ENCODE measurements at regions of chr1 and their contacts with region 1.

Region 1: GRCh38 chr1:63888984-63889383 is 115.2 kb downstream of the ROR1 start:
- DNase-seq: no peak
- H3K4me3 ChIP-seq: no peak overlapping the region
- H3K27ac ChIP-seq: no peak overlapping the region
- H3K4me1 ChIP-seq: no peaks in the 10 kb centered on the region
- H3K27me3 ChIP-seq: no peaks in the 10 kb centered on the region
- CTCF ChIP-seq: no peak
- POLR2A ChIP-seq: no peak

Region 2: DNA sequence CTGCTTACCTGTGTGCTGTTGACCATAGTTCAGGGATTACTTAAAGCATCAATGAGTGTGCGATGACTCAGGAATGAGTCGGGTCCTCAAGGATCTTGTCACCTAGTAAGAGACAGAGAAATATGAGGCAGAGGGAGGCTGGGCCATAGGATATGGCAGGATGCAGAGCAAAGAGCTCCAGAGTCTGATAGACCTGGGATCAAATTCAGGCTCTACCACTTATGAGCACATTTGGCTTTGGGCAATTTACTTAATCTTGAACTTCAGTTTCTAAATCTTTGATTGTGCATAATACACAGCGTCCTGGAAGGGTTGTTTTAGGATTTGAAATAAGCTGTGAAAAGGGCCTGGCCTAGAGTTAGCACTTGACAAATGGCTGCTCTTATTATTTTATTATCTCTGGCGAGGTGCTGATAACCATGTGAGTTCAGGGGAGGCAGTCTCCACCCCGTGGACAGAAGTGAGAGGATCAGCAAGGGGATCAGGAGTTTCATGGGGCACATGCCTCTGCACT is 20.7 kb before region 1 on chr1:
- intact Hi-C with region 1: no loop called
- DNase-seq: no peak
- H3K4me3 ChIP-seq: no peak overlapping the region
- H3K27ac ChIP-seq: no peak overlapping the region
- H3K4me1 ChIP-seq: peaks cover 0 to 3% of the 10 kb centered on the region in 2 donors
- H3K27me3 ChIP-seq: no peaks in the 10 kb centered on the region
- CTCF ChIP-seq: no peak
- POLR2A ChIP-seq: no peak

Region 3: DNA sequence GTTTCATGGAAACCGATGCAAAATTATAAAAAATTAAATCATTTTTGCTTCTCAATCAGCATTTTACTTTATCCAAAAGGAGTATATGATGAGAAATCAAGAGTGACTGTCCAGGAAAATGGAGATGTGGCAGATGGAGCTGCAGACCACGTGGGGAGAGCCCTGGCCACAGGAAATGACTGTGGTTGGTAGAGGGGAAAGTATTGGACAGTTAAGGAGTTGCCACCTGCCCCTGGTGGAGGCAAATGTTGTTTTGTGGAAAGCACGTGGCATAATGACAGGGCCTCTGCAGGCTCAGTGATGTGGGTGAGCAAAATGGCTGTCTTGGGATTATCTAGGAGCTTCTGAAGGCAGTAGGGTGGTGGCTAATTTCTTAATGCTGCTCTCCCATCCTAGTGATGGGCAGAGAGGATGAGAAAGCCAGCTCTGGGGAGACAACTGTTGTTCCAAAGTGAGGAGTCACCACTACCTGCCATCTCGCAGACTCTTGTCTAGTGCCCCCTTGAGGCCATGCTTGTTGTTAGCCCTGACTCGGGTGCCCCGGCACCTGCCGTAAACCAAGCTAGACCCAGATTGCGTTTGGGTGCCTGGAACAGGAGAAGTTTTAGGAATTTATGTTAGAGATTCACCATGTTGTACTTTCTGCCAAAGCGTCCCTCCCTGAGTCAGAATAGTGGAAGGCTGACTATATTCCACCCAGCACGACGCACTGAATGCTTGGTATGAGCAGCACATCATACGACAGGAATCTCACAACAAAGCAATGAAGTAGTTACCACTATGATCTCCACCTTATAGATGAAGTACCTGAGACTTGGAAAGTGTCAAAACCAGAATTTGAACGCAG is 28.8 kb after region 1 on chr1:
- intact Hi-C with region 1: no loop called
- DNase-seq: no peak
- H3K4me3 ChIP-seq: no peak overlapping the region
- H3K27ac ChIP-seq: no peak overlapping the region
- H3K4me1 ChIP-seq: no peaks in the 10 kb centered on the region
- H3K27me3 ChIP-seq: no peaks in the 10 kb centered on the region
- CTCF ChIP-seq: no peak
- POLR2A ChIP-seq: no peak

Region 4: DNA sequence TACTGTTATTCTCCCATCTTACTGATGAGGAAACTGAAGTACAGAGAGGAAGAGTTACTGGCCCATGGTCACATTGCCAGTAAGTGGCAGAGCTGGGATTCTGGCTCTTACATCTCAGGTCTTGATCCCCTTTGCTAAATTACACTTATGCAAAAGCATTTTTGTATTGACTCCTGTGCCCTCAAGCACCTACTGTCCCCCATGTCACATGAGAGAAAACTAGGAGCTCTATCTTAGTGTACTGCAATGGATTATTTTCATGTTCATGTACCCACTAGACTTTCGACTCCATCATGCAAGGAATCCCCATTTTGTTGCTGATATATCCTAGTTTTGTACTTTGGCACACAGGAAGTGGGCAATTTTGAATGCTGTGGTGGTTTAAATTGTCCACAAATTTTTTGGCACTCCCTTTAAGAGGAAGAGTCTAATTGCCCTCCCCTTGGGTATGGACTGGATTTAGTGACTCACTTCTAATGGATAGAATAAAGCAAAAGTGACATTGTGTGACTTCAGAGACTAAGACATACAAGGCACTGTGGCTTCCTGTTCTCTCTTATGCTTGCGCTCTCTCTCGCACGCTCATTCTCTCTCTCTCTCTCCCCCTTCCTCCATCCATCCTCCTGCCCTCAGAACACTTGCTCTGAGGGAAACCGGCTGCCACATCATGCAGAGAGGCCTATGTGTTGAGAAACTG is 1120.9 kb after region 1 on chr1:
- intact Hi-C with region 1: loop called (anchors 5 kb)
- DNase-seq: no peak
- H3K4me3 ChIP-seq: no peak overlapping the region
- H3K27ac ChIP-seq: peak overlapping the region in 1 of 2 donors; percentile 30
- H3K4me1 ChIP-seq: no peaks in the 10 kb centered on the region
- H3K27me3 ChIP-seq: no peaks in the 10 kb centered on the region
- CTCF ChIP-seq: no peak
- POLR2A ChIP-seq: no peak

Measured in breast epithelium (tissue), 4 donors.